Naive thymus-derived CD4-positive, alpha-beta T cell (primary cell): ENCODE measurements at regions of chr3 and their contacts with region 1.

Region 1: GRCh38 chr3:112734718-112735350 is 93.9 kb upstream of the CCDC80 start:
- DNase-seq: peak; percentile 14 to 76 (median 60)
- ATAC-seq: peak; percentile 82
- H3K4me3 ChIP-seq: no peak overlapping the region
- H3K4me3 Mint-ChIP-seq: peak overlapping the region in 1 of 10 donors; percentile 7
- H3K27ac ChIP-seq: no peak overlapping the region
- H3K27ac Mint-ChIP-seq: peak overlapping the region in 4 of 9 donors; percentile 8 to 76 (median 24)
- H3K4me1 ChIP-seq: peaks cover 25 to 44% of the 10 kb centered on the region in 2 donors
- H3K4me1 Mint-ChIP-seq: peaks cover 23 to 50% (median 46%) of the 10 kb centered on the region in 7 donors
- H3K27me3 ChIP-seq: no peaks in the 10 kb centered on the region
- H3K27me3 Mint-ChIP-seq: no peaks in the 10 kb centered on the region

Region 2: GRCh38 chr3:112642912-112643506 is 91.8 kb before region 1 on chr3:
- CTCF ChIA-PET with region 1: interaction called, 22 read pairs
- POLR2A ChIA-PET with region 1: no interaction called
- intact Hi-C with region 1: loop called (anchors 1 kb)
- DNase-seq: peak; percentile 51 to 80 (median 72)
- ATAC-seq: peak; percentile 97
- H3K4me3 ChIP-seq: peak overlapping the region; percentile 39
- H3K4me3 Mint-ChIP-seq: peak overlapping the region; percentile 6 to 81 (median 66)
- H3K27ac ChIP-seq: no peak overlapping the region
- H3K27ac Mint-ChIP-seq: peak overlapping the region in 2 of 9 donors; percentile 41 to 57
- H3K4me1 ChIP-seq: peaks cover 0 to 14% of the 10 kb centered on the region in 2 donors
- H3K4me1 Mint-ChIP-seq: peaks cover 7 to 24% (median 9%) of the 10 kb centered on the region in 7 donors
- H3K27me3 ChIP-seq: no peaks in the 10 kb centered on the region
- H3K27me3 Mint-ChIP-seq: peaks cover 0 to 16% (median 11%) of the 10 kb centered on the region in 5 donors

Region 3: DNA sequence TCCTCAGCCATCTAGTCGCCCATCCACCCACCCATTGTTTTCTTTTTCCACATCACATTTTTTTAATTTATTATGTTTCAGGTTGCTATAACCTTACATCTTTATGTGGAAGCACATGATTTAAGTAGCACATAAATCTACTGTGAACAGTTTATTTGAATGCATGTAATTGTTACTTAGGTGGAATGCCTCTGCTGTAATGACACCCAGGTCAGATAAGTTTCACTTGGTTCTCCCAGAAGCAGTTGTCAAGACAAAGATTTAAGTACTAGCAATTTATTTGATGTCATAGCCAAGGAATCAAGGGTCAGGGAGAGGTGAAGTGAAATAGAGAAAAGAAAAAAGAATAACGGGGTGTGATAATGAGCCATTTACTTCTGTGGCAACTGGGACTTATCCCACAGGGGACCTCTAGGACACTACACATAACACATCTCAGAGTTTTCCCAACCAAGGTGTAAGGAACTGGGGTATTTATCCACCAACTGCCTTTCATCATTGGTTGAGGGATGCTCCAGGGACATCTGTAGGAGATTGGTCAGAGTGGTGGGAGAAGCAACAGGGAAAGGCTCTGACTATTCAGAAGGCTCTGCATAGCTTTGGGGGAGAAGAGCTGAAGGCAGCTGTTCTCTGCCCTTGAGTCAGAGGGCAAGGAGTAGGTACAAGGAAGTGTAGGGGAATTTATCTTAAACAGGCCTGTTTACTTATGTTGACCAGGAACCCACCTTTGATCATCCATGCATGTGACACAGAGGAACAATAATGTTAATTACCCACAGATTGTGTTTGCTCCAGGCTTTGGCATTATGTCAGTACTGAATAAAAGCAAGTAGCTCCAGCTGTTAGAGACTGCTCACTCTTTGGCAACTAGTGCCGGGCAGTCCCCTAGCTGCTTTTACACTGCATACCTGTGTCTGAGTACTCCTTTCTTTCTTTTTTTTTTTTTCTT is 17.0 kb after region 1 on chr3:
- CTCF ChIA-PET with region 1: interaction called, 16 read pairs
- POLR2A ChIA-PET with region 1: interaction called, 3 read pairs
- intact Hi-C with region 1: no loop called
- DNase-seq: no peak
- ATAC-seq: no peak
- H3K4me3 ChIP-seq: no peak overlapping the region
- H3K4me3 Mint-ChIP-seq: no peak overlapping the region
- H3K27ac ChIP-seq: no peak overlapping the region
- H3K27ac Mint-ChIP-seq: no peak overlapping the region
- H3K4me1 ChIP-seq: peaks cover 0 to 6% of the 10 kb centered on the region in 2 donors
- H3K4me1 Mint-ChIP-seq: peaks cover 0 to 11% (median 5%) of the 10 kb centered on the region in 7 donors
- H3K27me3 ChIP-seq: no peaks in the 10 kb centered on the region
- H3K27me3 Mint-ChIP-seq: peaks cover 0 to 2% (median 0%) of the 10 kb centered on the region in 5 donors

Region 4: DNA sequence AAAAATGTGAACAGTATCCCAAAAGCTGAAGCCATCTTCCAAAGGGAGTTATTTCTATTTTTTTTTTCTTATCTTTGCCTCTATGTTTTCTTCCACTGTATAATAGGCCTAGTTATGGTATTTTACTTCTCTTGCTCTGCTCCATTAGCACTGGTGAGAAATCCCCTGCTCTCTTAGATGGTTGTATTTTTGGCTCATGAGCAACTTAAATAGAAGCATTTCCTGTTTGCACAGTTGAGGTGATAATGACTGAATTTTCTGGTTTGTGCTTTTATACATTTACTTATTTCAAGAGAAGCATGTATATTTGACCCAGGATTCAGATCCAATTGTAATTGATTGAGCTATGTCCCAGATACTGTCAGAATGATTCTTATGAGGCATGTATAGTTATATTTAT is 173.4 kb after region 1 on chr3:
- CTCF ChIA-PET with region 1: interaction called, 3 read pairs
- POLR2A ChIA-PET with region 1: no interaction called
- intact Hi-C with region 1: loop called in 1 of 2 experiments (anchors 5 kb)
- DNase-seq: peak in 2 of 9 donors; percentile 1
- ATAC-seq: peak; percentile 44
- H3K4me3 ChIP-seq: no peak overlapping the region
- H3K4me3 Mint-ChIP-seq: peak overlapping the region in 1 of 10 donors; percentile 27
- H3K27ac ChIP-seq: no peak overlapping the region
- H3K27ac Mint-ChIP-seq: peak overlapping the region in 1 of 9 donors; percentile 19
- H3K4me1 ChIP-seq: peaks cover 0 to 5% of the 10 kb centered on the region in 2 donors
- H3K4me1 Mint-ChIP-seq: peaks cover 7 to 37% (median 20%) of the 10 kb centered on the region in 7 donors
- H3K27me3 ChIP-seq: no peaks in the 10 kb centered on the region
- H3K27me3 Mint-ChIP-seq: no peaks in the 10 kb centered on the region

Region 5: DNA sequence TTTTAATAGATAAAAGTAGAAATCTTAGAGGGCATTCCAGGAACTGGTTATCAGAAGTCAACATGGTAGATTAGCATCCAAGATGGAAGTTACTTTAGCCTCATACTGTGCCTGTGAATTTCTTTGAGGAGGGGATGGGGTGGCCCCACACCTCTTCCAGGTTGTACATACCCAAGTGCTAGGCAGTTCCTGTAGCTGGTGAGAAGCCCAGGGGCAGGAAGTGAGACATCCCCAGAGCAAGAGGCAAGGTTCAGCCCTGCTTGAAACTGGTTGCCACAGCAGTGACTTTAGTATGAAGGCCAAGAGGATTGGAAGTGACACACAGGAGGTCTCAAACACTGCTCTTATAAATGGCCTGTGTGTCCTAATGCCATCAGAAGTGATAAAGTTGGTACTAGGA is 267.8 kb after region 1 on chr3:
- CTCF ChIA-PET with region 1: interaction called, 4 read pairs
- POLR2A ChIA-PET with region 1: interaction called, 3 read pairs
- intact Hi-C with region 1: loop called in 1 of 2 experiments (anchors 1 kb)
- DNase-seq: peak in 7 of 9 donors; percentile 27 to 53 (median 41)
- ATAC-seq: peak; percentile 50
- H3K4me3 ChIP-seq: no peak overlapping the region
- H3K4me3 Mint-ChIP-seq: peak overlapping the region in 8 of 10 donors; percentile 19 to 70 (median 48)
- H3K27ac ChIP-seq: peak overlapping the region; percentile 78
- H3K27ac Mint-ChIP-seq: peak overlapping the region; percentile 74 to 98 (median 89)
- H3K4me1 ChIP-seq: peaks cover 22 to 61% of the 10 kb centered on the region in 2 donors
- H3K4me1 Mint-ChIP-seq: peaks cover 33 to 99% (median 91%) of the 10 kb centered on the region in 7 donors
- H3K27me3 ChIP-seq: no peaks in the 10 kb centered on the region
- H3K27me3 Mint-ChIP-seq: no peaks in the 10 kb centered on the region

Region 6: GRCh38 chr3:113051302-113051711 is 316.5 kb after region 1 on chr3:
- CTCF ChIA-PET with region 1: interaction called, 3 read pairs
- POLR2A ChIA-PET with region 1: no interaction called
- intact Hi-C with region 1: loop called in 1 of 2 experiments (anchors 1 kb)
- DNase-seq: peak; percentile 65 to 86 (median 77)
- ATAC-seq: peak; percentile 99
- H3K4me3 ChIP-seq: no peak overlapping the region
- H3K4me3 Mint-ChIP-seq: no peak overlapping the region
- H3K27ac ChIP-seq: no peak overlapping the region
- H3K27ac Mint-ChIP-seq: no peak overlapping the region
- H3K4me1 ChIP-seq: peaks cover 0 to 4% of the 10 kb centered on the region in 2 donors
- H3K4me1 Mint-ChIP-seq: peaks cover 0 to 18% (median 14%) of the 10 kb centered on the region in 7 donors
- H3K27me3 ChIP-seq: no peaks in the 10 kb centered on the region
- H3K27me3 Mint-ChIP-seq: no peaks in the 10 kb centered on the region

Region 7: GRCh38 chr3:113329757-113330156 is 594.9 kb after region 1 on chr3:
- CTCF ChIA-PET with region 1: no interaction called
- POLR2A ChIA-PET with region 1: no interaction called
- intact Hi-C with region 1: no loop called
- DNase-seq: no peak
- ATAC-seq: no peak
- H3K4me3 ChIP-seq: no peak overlapping the region
- H3K4me3 Mint-ChIP-seq: no peak overlapping the region
- H3K27ac ChIP-seq: no peak overlapping the region
- H3K27ac Mint-ChIP-seq: no peak overlapping the region
- H3K4me1 ChIP-seq: no peaks in the 10 kb centered on the region
- H3K4me1 Mint-ChIP-seq: peaks cover 0 to 4% (median 0%) of the 10 kb centered on the region in 7 donors
- H3K27me3 ChIP-seq: no peaks in the 10 kb centered on the region
- H3K27me3 Mint-ChIP-seq: no peaks in the 10 kb centered on the region